ENCODE measurements at regions of chr12 and their contacts with region 1.

Region 1: DNA sequence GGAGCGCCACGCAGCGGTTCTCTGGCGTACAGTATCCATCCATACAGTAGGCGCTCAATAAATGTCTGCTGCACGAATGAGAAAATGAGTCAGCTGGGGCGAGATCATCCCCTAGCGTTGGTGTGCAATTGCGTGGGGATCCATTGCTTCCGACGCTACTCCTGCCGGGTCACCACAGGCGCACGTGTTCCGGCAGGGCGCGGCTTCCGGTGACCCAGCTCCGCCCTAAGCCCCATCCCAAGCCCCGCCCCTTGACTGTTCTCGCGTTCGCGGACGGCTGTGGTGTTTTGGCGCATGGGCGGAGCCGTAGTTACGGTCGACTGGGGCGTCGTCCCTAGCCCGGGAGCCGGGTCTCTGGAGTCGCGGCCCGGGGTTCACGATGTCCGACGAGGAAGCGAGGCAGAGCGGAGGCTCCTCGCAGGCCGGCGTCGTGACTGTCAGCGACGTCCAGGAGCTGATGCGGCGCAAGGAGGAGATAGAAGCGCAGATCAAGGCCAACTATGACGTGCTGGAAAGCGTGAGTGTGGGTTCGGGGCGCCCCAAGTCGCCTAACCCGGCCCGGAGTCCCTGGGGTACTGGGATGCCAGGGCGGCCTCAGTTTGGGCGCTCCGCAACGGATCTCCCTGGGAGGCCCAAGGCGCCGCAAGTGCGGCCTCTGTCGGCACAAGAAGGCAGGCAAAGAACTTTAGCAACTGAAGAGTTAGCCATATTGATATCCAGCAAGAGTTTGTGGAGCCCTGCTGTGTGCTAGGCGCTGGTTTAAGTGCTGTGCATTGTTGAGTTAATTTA is at the start of gene PSMD9:
- DNase-seq: peak; percentile 97
- H3K4me3 Mint-ChIP-seq: peak within 1 kb of the TSS; percentile 98
- H3K27ac Mint-ChIP-seq: peak within 1 kb of the TSS; percentile 98
- H3K4me1 Mint-ChIP-seq: peaks cover 13% of the 10 kb centered on the region
- H3K27me3 Mint-ChIP-seq: no peaks in the 10 kb centered on the region
- CTCF ChIP-seq: peak; percentile 62
- total RNA-seq, gene PSMD9: 96.3 and 105 TPM in 2 replicates

Region 2: GRCh38 chr12:121697098-121697698 is 191.5 kb before region 1 on chr12:
- CTCF ChIA-PET with region 1: interaction called, 4 read pairs
- POLR2A ChIA-PET with region 1: interaction called, 3 read pairs
- intact Hi-C with region 1: loop called (anchors 2 kb)
- DNase-seq: peak; percentile 61
- H3K4me3 Mint-ChIP-seq: no peak overlapping the region
- H3K27ac Mint-ChIP-seq: no peak overlapping the region
- H3K4me1 Mint-ChIP-seq: no peaks in the 10 kb centered on the region
- H3K27me3 Mint-ChIP-seq: no peaks in the 10 kb centered on the region
- CTCF ChIP-seq: peak; percentile 54

Region 3: DNA sequence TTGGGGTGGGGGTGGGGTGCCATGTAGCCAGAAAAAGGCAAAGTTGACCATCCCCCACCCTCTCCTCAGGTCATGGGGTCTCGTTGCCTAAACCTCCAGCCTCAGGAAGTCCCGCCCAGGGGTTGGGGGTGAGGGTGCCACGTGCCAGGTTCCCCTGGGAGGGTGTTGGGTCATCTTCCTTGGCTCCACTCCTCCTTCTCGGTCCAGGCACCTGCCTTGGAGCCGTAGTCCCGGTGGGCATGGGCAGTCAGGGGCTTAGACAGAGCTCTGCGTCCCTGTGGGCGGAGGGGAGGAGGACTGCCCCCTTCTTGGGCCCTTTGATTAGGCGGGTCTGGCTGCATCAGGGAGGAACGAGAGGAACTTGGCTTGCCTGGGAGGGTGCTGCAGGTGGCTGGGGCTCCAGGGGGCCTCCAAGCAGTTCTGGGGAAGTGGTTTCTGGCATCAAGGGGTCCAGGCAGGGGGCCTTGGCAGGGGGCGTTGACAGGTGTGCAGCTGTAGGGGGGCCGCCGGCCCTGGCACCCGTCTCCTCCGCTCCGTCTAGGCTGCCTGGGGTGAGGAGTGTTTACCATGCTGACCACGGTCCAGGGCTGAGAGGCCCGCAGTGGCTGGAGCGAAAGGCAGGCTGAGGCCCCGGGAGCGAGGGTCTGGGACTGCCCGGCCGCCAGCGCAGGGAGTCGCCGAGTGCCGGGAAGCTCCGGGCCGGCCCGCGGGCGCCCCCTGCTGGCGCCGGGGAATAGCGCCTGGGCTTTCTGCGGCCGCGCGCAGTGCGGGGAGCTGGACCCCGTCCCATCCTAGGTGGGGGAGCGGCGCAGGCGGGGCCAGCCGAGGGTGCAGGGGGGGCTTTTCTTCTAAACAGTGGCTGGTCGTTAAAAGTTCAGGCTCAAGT is 77.0 kb before region 1 on chr12:
- CTCF ChIA-PET with region 1: interaction called, 21 read pairs
- POLR2A ChIA-PET with region 1: interaction called, 22 read pairs
- intact Hi-C with region 1: no loop called
- DNase-seq: peak; percentile 61
- H3K4me3 Mint-ChIP-seq: peak overlapping the region; percentile 82
- H3K27ac Mint-ChIP-seq: no peak overlapping the region
- H3K4me1 Mint-ChIP-seq: peaks cover 28% of the 10 kb centered on the region
- H3K27me3 Mint-ChIP-seq: no peaks in the 10 kb centered on the region
- CTCF ChIP-seq: peak; percentile 99

Region 4: GRCh38 chr12:121839106-121839992 is 49.3 kb before region 1 on chr12:
- CTCF ChIA-PET with region 1: interaction called, 3 read pairs
- POLR2A ChIA-PET with region 1: interaction called, 8 read pairs
- intact Hi-C with region 1: loop called (anchors 1 kb)
- DNase-seq: peak; percentile 98
- H3K4me3 Mint-ChIP-seq: peak overlapping the region; percentile 93
- H3K27ac Mint-ChIP-seq: peak overlapping the region; percentile 46
- H3K4me1 Mint-ChIP-seq: peaks cover 13% of the 10 kb centered on the region
- H3K27me3 Mint-ChIP-seq: no peaks in the 10 kb centered on the region
- CTCF ChIP-seq: no peak

Region 5: DNA sequence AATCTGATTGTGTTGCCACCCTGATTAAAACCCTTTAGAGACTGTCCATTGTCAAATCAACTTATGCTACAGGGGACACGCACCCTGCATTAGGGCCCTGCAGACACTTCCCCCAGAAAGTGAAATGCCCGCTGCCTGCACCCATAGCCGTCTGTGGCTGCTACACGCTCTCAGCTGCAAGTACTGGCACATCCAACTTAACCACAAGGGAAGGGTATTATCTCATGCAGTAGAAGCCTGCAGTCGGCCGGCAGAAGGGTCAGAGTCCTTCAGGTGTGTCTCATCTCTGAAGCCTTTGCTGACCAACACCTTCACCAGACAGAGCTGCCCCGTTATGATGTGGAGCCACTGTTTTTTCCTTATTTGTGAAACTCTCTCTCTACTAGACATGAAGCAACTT is 50.5 kb after region 1 on chr12:
- CTCF ChIA-PET with region 1: no interaction called
- POLR2A ChIA-PET with region 1: interaction called, 11 read pairs
- intact Hi-C with region 1: no loop called
- DNase-seq: peak; percentile 52
- H3K4me3 Mint-ChIP-seq: no peak overlapping the region
- H3K27ac Mint-ChIP-seq: peak overlapping the region; percentile 9
- H3K4me1 Mint-ChIP-seq: peaks cover 8% of the 10 kb centered on the region
- H3K27me3 Mint-ChIP-seq: no peaks in the 10 kb centered on the region
- CTCF ChIP-seq: no peak

Region 6: DNA sequence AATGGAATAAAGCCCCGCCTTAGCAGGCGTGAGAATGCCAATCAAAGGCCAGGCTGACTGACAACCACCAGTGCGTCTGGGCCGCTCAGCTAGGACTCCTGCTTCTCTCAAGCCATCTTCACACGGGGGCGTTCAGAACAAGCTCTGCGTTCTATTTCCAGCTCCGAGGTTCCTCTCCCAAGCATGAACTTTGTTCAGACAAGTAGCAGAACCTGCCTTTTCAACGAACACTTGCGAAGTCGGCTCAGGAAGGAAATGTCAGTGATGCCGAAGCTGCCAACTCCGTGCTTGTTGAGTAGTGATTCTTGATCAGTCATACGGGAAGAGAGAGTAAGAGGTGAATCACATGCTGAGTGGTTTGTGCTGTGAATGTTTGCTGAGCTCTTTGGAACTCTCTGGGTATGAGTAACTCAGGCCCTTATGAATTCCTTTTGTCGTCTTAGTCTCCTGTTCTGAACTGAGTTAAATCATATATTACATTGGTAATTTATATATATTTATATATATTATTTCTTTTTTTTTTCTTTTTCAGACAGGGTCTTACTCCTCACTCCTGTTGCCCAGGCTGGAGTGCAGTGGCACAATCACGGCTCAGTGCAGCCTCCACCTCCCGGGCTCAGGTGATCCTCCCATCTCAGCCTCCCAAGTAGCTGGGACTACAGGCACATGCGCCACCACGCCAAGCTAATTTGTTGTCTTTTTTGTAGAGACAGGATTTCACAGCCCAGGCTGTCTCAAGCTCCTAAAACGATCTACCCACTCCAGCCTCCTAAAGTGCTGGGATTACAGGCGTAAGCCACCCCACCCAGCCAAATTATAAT is 103.6 kb after region 1 on chr12:
- CTCF ChIA-PET with region 1: no interaction called
- POLR2A ChIA-PET with region 1: interaction called, 11 read pairs
- intact Hi-C with region 1: no loop called
- DNase-seq: peak; percentile 93
- H3K4me3 Mint-ChIP-seq: peak overlapping the region; percentile 61
- H3K27ac Mint-ChIP-seq: peak overlapping the region; percentile 90
- H3K4me1 Mint-ChIP-seq: peaks cover 9% of the 10 kb centered on the region
- H3K27me3 Mint-ChIP-seq: no peaks in the 10 kb centered on the region
- CTCF ChIP-seq: no peak

Region 7: DNA sequence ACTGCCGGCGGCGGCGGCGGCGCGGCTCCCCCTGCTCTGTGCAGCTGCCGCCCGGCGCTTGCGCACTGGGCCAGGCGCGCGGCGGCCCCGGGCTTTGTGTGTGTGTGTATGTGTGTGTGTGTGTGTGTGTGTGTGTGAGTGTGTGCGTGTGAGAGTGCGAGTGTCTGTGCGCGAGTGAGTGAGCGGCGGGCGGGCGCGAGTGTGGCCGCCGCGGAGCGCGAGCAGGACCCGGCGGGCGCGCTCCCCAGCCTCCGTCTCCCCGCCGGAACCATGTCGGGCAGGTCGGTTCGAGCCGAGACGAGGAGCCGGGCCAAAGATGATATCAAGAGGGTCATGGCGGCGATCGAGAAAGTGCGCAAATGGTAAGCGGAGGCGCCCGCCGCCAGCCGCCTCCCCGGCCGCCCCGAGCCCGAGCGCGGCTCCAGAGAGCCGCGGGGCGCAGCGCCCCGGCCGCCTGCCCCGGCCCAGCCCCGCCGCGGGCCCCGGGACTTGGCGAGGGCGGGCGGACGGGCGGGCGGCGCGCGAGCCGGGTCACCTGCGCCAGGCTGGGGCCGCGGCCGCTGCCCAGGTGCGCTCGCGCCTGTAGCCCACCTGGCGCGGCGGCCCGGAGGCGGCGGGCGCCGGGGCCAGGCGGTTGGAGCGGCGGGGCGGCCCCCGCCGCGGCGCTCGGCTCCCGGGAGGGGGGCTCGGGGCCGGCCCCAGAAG is 133.3 kb after region 1 on chr12 and contains the start of gene BCL7A:
- CTCF ChIA-PET with region 1: interaction called, 3 read pairs
- POLR2A ChIA-PET with region 1: interaction called, 16 read pairs
- intact Hi-C with region 1: loop called (anchors 5 kb)
- DNase-seq: peak; percentile 60
- H3K4me3 Mint-ChIP-seq: peak within 1 kb of the TSS; percentile 94
- H3K27ac Mint-ChIP-seq: peak within 1 kb of the TSS; percentile 76
- H3K4me1 Mint-ChIP-seq: peaks cover 5% of the 10 kb centered on the region
- H3K27me3 Mint-ChIP-seq: no peaks in the 10 kb centered on the region
- CTCF ChIP-seq: no peak
- total RNA-seq, gene BCL7A: 17.9 and 18.1 TPM in 2 replicates